Spleen (tissue), 13 donors: ENCODE measurements at regions of chr14 and their contacts with region 1.

Region 1: GRCh38 chr14:31297701-31298344 is 90.2 kb upstream of the HECTD1 start:
- DNase-seq: no peak
- H3K4me3 ChIP-seq: no peak overlapping the region
- H3K27ac ChIP-seq: no peak overlapping the region
- H3K4me1 ChIP-seq: no peaks in the 10 kb centered on the region
- H3K27me3 ChIP-seq: no peaks in the 10 kb centered on the region
- CTCF ChIP-seq: no peak
- POLR2A ChIP-seq: no peak

Region 2: DNA sequence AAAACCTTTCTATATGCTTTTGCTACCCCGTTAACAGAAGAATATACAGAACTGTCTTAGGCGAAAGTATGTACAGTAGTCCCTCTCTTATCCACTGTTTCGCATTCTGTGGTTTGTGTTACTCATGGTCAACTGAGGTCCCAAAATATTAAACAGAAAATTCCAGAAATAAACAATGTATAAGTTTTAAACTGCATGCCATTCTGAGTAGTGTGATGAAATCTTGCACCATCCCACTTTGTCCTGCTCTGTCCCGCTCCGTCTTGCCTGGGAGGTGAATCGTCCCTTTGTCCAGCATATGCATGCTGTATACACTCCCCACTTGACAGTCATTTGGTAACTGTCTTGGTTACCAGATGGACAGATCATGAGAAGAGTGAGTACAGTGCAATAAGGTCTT is 201.6 kb before region 1 on chr14:
- intact Hi-C with region 1: loop called (anchors 5 kb)
- DNase-seq: no peak
- H3K4me3 ChIP-seq: no peak overlapping the region
- H3K27ac ChIP-seq: no peak overlapping the region
- H3K4me1 ChIP-seq: peaks cover 0 to 8% (median 1%) of the 10 kb centered on the region in 6 donors
- H3K27me3 ChIP-seq: no peaks in the 10 kb centered on the region
- CTCF ChIP-seq: no peak
- POLR2A ChIP-seq: no peak

Region 3: DNA sequence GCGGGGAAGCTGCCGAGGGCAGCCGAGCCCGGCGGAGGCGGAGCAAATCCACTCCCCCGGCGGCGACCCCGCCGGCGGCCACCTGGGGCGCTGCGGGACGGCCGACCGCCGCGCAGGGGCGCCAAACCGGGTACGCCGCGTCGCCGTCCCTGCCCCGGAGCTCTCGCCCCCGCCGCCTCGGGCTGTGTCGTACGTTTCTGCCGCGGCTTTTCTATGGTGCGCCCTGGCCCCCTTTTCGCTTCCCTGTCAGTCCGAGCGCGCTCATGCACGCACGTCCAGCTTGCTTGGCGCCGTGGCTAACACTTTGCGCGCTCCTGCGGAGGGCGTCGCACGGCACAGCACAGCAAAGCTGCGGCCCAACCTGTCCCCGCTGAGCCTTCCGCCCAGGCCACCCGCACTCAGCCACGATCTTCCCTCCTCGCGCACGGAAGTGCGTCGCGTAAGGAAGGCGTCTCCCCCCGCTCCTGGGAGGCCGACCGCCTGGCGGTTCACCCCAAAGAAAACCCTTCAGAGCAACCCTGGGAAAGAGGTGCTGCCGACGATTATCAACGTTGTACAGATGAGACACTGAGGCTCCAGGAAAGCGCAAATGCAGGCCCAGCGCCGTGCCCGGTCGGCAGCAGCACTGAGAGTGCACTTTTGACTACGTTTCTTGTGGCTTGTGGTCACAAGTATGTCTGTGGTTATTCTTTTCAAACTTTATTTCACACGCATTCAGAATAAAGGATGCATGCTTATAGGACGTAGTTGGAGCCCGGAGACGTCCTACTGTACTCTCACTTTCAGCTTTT is 89.9 kb before region 1 on chr14 and contains the start of gene HECTD1:
- intact Hi-C with region 1: no loop called
- DNase-seq: no peak
- H3K4me3 ChIP-seq: peak within 1 kb of the TSS; percentile 66 to 84 (median 72)
- H3K27ac ChIP-seq: peak within 1 kb of the TSS; percentile 97 to 99 (median 98)
- H3K4me1 ChIP-seq: peaks cover 24 to 58% (median 35%) of the 10 kb centered on the region in 6 donors
- H3K27me3 ChIP-seq: no peaks in the 10 kb centered on the region
- CTCF ChIP-seq: peak in 10 of 11 experiments; percentile 11 to 99 (median 92)
- POLR2A ChIP-seq: peak in 1 of 3 donors; percentile 40
- total RNA-seq, gene HECTD1: 133 to 176 (median 160) TPM

Region 4: GRCh38 chr14:31529053-31529452 is 231.2 kb after region 1 on chr14:
- intact Hi-C with region 1: no loop called
- DNase-seq: no peak
- H3K4me3 ChIP-seq: no peak overlapping the region
- H3K27ac ChIP-seq: no peak overlapping the region
- H3K4me1 ChIP-seq: no peaks in the 10 kb centered on the region
- H3K27me3 ChIP-seq: no peaks in the 10 kb centered on the region
- CTCF ChIP-seq: no peak
- POLR2A ChIP-seq: no peak